RWPE1 (cell line): ENCODE measurements at regions of chr15 and their contacts with region 1.

Region 1: GRCh38 chr15:82122746-82123400 is 77.1 kb upstream of the MEX3B start:
- DNase-seq: peak; percentile 96
- H3K27ac ChIP-seq: peak overlapping the region; percentile 75
- CTCF ChIP-seq: no peak

Region 2: GRCh38 chr15:83067638-83067962 is 944.7 kb after region 1 on chr15:
- CTCF ChIA-PET with region 1: interaction called, 11 read pairs
- POLR2A ChIA-PET with region 1: no interaction called
- DNase-seq: no peak
- H3K27ac ChIP-seq: peak overlapping the region; percentile 94
- CTCF ChIP-seq: no peak